ENCODE measurements at regions of chr12 and their contacts with region 1.

Region 1: DNA sequence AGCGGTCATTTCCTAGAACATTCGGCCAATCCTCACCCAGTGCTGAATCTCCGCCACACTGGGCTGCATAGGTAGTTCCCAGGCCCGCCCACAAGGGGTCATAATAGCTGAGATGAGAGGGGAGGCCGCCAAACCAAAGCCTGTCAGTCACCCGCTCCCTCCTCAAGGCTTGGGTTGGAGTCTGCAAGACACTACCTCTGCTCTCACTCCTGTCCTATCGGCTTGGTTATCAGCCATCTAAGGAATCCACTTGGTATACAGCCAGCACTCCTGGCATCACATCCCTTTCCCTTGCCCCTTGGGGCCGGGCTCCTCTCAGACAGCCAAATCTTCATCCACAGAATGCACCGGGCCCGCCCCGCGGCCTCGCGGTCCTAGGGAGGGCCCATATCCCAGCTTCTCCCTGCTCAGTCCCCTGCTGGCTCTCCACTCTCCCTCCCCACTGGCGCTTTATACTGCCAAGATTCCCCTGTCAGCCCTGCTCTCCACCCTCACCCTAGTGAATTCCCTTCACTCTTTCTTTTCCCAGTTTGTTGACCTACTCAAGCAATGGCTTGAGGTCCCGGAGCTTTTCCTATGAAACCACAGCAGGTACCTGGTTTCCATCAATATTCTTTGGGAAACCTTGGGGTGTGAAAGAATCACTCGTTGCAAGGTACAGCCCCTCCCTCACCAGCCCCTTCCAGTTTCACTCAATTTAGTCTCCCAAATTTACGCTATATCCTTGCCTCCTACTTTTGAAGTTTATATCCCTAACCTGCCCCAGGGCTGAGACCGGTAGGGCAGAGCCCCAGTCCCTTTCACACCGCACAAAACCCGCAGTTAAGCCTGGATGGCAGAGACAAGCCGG is 1.4 kb downstream of the IFFO1 start:
- DNase-seq: no peak
- H3K4me3 ChIP-seq: peak overlapping the region; percentile 83
- CTCF ChIP-seq: peak; percentile 78

Region 2: GRCh38 chr12:6533923-6534694 is 20.3 kb before region 1 on chr12 and contains the start of gene GAPDH:
- CTCF ChIA-PET with region 1: interaction called, 235 read pairs
- POLR2A ChIA-PET with region 1: interaction called, 359 read pairs
- DNase-seq: peak; percentile 86
- H3K4me3 ChIP-seq: peak within 1 kb of the TSS; percentile 97
- CTCF ChIP-seq: no peak

Region 3: GRCh38 chr12:6540181-6540877 is 14.1 kb before region 1 on chr12:
- CTCF ChIA-PET with region 1: interaction called, 235 read pairs
- POLR2A ChIA-PET with region 1: interaction called, 359 read pairs
- DNase-seq: no peak
- H3K4me3 ChIP-seq: peak overlapping the region; percentile 10; the same call in 1 of the 2 replicates
- CTCF ChIP-seq: peak; percentile 7

Region 4: GRCh38 chr12:6570264-6570887 is 16.0 kb after region 1 on chr12:
- CTCF ChIA-PET with region 1: interaction called, 203 read pairs
- POLR2A ChIA-PET with region 1: interaction called, 3 read pairs
- DNase-seq: no peak
- H3K4me3 ChIP-seq: no peak overlapping the region
- CTCF ChIP-seq: peak; percentile 60

Measured in AG04449 (cell line).